ENCODE measurements at regions of chr2 and their contacts with region 1.

Region 1: GRCh38 chr2:47767880-47768609 is 14.9 kb upstream of the MSH6 start:
- DNase-seq: peak; percentile 43 to 54 (median 45)
- H3K4me3 ChIP-seq: no peak overlapping the region
- H3K4me3 Mint-ChIP-seq: peak overlapping the region; percentile 63 to 84
- H3K27ac ChIP-seq: no peak overlapping the region
- H3K27ac Mint-ChIP-seq: peak overlapping the region in 3 of 7 donors; percentile 18 to 70 (median 50)
- H3K4me1 ChIP-seq: peaks cover 0 to 6% of the 10 kb centered on the region in 2 donors
- H3K4me1 Mint-ChIP-seq: peaks cover 6% of the 10 kb centered on the region
- H3K27me3 ChIP-seq: no peaks in the 10 kb centered on the region
- H3K27me3 Mint-ChIP-seq: peaks cover 1 to 9% (median 7%) of the 10 kb centered on the region in 3 donors
- CTCF ChIP-seq: peak; percentile 99

Region 2: GRCh38 chr2:47339745-47340541 is 428.1 kb before region 1 on chr2:
- intact Hi-C with region 1: loop called in 1 of 2 experiments (anchors 5 kb)
- DNase-seq: no peak
- H3K4me3 ChIP-seq: no peak overlapping the region
- H3K4me3 Mint-ChIP-seq: no peak overlapping the region
- H3K27ac ChIP-seq: no peak overlapping the region
- H3K27ac Mint-ChIP-seq: no peak overlapping the region
- H3K4me1 ChIP-seq: peaks cover 20 to 29% of the 10 kb centered on the region in 2 donors
- H3K4me1 Mint-ChIP-seq: peaks cover 37% of the 10 kb centered on the region
- H3K27me3 ChIP-seq: no peaks in the 10 kb centered on the region
- H3K27me3 Mint-ChIP-seq: peaks cover 3 to 13% (median 7%) of the 10 kb centered on the region in 3 donors
- CTCF ChIP-seq: no peak

Region 3: GRCh38 chr2:47437287-47437686 is 330.8 kb before region 1 on chr2:
- intact Hi-C with region 1: loop called in 1 of 2 experiments (anchors 10 kb)
- DNase-seq: no peak
- H3K4me3 ChIP-seq: no peak overlapping the region
- H3K4me3 Mint-ChIP-seq: no peak overlapping the region
- H3K27ac ChIP-seq: no peak overlapping the region
- H3K27ac Mint-ChIP-seq: no peak overlapping the region
- H3K4me1 ChIP-seq: no peaks in the 10 kb centered on the region
- H3K4me1 Mint-ChIP-seq: peaks cover 3% of the 10 kb centered on the region
- H3K27me3 ChIP-seq: no peaks in the 10 kb centered on the region
- H3K27me3 Mint-ChIP-seq: no peaks in the 10 kb centered on the region
- CTCF ChIP-seq: peak; percentile 25

Region 4: GRCh38 chr2:47888581-47889280 is 120.7 kb after region 1 on chr2:
- intact Hi-C with region 1: no loop called
- DNase-seq: no peak
- H3K4me3 ChIP-seq: no peak overlapping the region
- H3K4me3 Mint-ChIP-seq: no peak overlapping the region
- H3K27ac ChIP-seq: no peak overlapping the region
- H3K27ac Mint-ChIP-seq: no peak overlapping the region
- H3K4me1 ChIP-seq: no peaks in the 10 kb centered on the region
- H3K4me1 Mint-ChIP-seq: peaks cover 20% of the 10 kb centered on the region
- H3K27me3 ChIP-seq: no peaks in the 10 kb centered on the region
- H3K27me3 Mint-ChIP-seq: no peaks in the 10 kb centered on the region
- CTCF ChIP-seq: no peak